Pancreas (tissue), 10 donors: ENCODE measurements at regions of chr9 and their contacts with region 1.

Region 1: GRCh38 chr9:99966720-99967119 is 60.3 kb downstream of the STX17 start:
- DNase-seq: no peak
- ATAC-seq: peak; percentile 49 to 82 (median 64)
- H3K4me3 ChIP-seq: no peak overlapping the region
- H3K27ac ChIP-seq: no peak overlapping the region
- H3K4me1 ChIP-seq: no peaks in the 10 kb centered on the region
- H3K27me3 ChIP-seq: no peaks in the 10 kb centered on the region
- CTCF ChIP-seq: no peak

Region 2: GRCh38 chr9:99906403-99907207 is 60.1 kb before region 1 on chr9 and contains the start of gene STX17:
- intact Hi-C with region 1: loop called in 1 of 3 experiments (anchors 10 kb)
- DNase-seq: peak; percentile 67 to 94 (median 82)
- ATAC-seq: peak; percentile 94 to 98 (median 95)
- H3K4me3 ChIP-seq: peak within 1 kb of the TSS; percentile 81 to 92 (median 88)
- H3K27ac ChIP-seq: peak within 1 kb of the TSS; percentile 97 to 99 (median 98)
- H3K4me1 ChIP-seq: peaks cover 6 to 13% (median 6%) of the 10 kb centered on the region in 3 donors
- H3K27me3 ChIP-seq: no peaks in the 10 kb centered on the region
- CTCF ChIP-seq: no peak
- total RNA-seq, gene STX17: 20.9 to 27.9 (median 22.1) TPM